ENCODE measurements at regions of chr20 and their contacts with region 1.

Region 1: GRCh38 chr20:56964888-56965287 is 301.6 kb downstream of the BMP7 start:
- DNase-seq: no peak
- ATAC-seq: no peak
- H3K4me3 ChIP-seq: no peak overlapping the region
- H3K27ac ChIP-seq: no peak overlapping the region
- H3K4me1 ChIP-seq: no peaks in the 10 kb centered on the region
- H3K27me3 ChIP-seq: peaks cover 0 to 17% (median 0%) of the 10 kb centered on the region in 9 donors
- CTCF ChIP-seq: no peak
- POLR2A ChIP-seq: no peak

Region 2: DNA sequence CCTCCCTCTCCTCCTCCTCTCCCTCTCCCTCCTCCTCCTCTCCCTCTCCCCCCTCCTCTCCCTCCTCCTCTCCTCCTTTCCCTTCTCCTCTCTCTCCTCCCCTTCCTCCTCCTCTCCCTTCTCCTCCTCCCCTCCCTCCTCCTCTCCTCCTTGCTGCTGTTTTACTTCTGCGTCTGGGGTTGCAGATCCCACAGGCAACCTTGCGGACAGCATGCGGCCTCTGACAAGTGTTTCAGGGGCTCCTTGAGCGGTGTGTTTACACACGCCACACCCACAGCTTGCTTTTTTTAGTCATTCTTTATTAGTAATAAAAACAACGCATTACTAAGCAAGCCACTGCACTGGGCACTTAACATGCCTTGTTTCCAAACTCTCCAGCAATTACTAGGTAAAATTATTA is 253.9 kb before region 1 on chr20:
- intact Hi-C with region 1: no loop called
- DNase-seq: no peak
- ATAC-seq: no peak
- H3K4me3 ChIP-seq: no peak overlapping the region
- H3K27ac ChIP-seq: no peak overlapping the region
- H3K4me1 ChIP-seq: no peaks in the 10 kb centered on the region
- H3K27me3 ChIP-seq: peaks cover 0 to 17% (median 0%) of the 10 kb centered on the region in 9 donors
- CTCF ChIP-seq: no peak
- POLR2A ChIP-seq: no peak

Region 3: GRCh38 chr20:57022312-57022711 is 57.4 kb after region 1 on chr20:
- intact Hi-C with region 1: loop called in 1 of 10 experiments (anchors 10 kb)
- DNase-seq: no peak
- ATAC-seq: no peak
- H3K4me3 ChIP-seq: no peak overlapping the region
- H3K27ac ChIP-seq: no peak overlapping the region
- H3K4me1 ChIP-seq: no peaks in the 10 kb centered on the region
- H3K27me3 ChIP-seq: peaks cover 0 to 58% (median 13%) of the 10 kb centered on the region in 9 donors
- CTCF ChIP-seq: no peak
- POLR2A ChIP-seq: no peak

Region 4: GRCh38 chr20:57089691-57090150 is 124.8 kb after region 1 on chr20:
- intact Hi-C with region 1: no loop called
- DNase-seq: peak; percentile 43 to 84 (median 62)
- ATAC-seq: peak; percentile 73 to 90 (median 84)
- H3K4me3 ChIP-seq: no peak overlapping the region
- H3K27ac ChIP-seq: no peak overlapping the region
- H3K4me1 ChIP-seq: peaks cover 0 to 8% (median 0%) of the 10 kb centered on the region in 12 donors
- H3K27me3 ChIP-seq: peaks cover 0 to 29% (median 3%) of the 10 kb centered on the region in 9 donors
- CTCF ChIP-seq: peak; percentile 68 to 93 (median 84)
- POLR2A ChIP-seq: no peak